Testis (tissue), 5 donors: ENCODE measurements at regions of chr1 and their contacts with region 1.

Region 1: DNA sequence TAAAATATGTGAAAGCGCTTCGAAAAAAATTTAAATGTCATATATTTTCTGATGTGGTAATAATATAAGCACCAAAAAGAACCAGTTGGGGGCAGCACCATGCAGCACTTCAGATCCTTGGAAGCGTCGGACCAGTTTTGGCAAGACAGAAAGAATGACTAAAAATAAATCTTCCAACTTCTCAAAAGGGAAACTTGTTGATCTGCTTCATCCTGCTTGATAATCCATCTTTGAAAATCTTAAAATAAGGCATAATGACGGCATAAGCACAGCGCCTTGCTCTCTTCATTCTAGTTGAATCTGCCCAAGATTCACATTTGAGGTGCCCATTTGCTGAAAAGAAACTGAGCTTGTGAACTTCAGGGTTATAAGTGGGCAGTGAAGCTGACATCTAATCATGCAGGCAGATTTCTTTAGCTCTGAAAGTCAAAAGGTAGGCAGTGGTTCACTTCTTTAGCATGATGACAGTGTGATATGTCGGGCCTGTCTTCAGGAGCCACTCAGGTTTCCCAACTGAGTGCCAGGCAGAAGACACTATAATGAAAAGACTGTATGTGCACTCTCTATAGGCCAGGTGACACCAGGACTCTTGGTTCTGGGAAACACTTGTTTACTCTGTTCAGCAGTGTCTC is 19.8 kb upstream of the MUTYH start:
- DNase-seq: peak; percentile 82
- H3K4me3 ChIP-seq: no peak overlapping the region
- H3K27ac ChIP-seq: peak overlapping the region; percentile 9 to 28
- H3K4me1 ChIP-seq: no peaks in the 10 kb centered on the region
- H3K27me3 ChIP-seq: no peaks in the 10 kb centered on the region
- CTCF ChIP-seq: peak; percentile 47 to 71 (median 70)
- POLR2A ChIP-seq: no peak

Region 2: GRCh38 chr1:45490626-45491486 is 130.9 kb after region 1 on chr1 and contains the start of gene TESK2:
- intact Hi-C with region 1: loop called (anchors 10 kb)
- DNase-seq: peak; percentile 99
- H3K4me3 ChIP-seq: peak within 1 kb of the TSS; percentile 71 to 86
- H3K27ac ChIP-seq: peak within 1 kb of the TSS; percentile 69 to 86
- H3K4me1 ChIP-seq: no peaks in the 10 kb centered on the region
- H3K27me3 ChIP-seq: no peaks in the 10 kb centered on the region
- CTCF ChIP-seq: peak in 2 of 3 experiments; percentile 54 to 61
- POLR2A ChIP-seq: peak; percentile 70
- total RNA-seq, gene TESK2: 14.3 to 20.9 TPM